Activated CD4-positive, alpha-beta T cell treated with anti-CD3 and anti-CD28 coated beads, Interleukin-2, amount 10 ng/mL, durations not matched to agents 24 days and 14 days (primary cell): ENCODE measurements at regions of chrX and their contacts with region 1.

Region 1: DNA sequence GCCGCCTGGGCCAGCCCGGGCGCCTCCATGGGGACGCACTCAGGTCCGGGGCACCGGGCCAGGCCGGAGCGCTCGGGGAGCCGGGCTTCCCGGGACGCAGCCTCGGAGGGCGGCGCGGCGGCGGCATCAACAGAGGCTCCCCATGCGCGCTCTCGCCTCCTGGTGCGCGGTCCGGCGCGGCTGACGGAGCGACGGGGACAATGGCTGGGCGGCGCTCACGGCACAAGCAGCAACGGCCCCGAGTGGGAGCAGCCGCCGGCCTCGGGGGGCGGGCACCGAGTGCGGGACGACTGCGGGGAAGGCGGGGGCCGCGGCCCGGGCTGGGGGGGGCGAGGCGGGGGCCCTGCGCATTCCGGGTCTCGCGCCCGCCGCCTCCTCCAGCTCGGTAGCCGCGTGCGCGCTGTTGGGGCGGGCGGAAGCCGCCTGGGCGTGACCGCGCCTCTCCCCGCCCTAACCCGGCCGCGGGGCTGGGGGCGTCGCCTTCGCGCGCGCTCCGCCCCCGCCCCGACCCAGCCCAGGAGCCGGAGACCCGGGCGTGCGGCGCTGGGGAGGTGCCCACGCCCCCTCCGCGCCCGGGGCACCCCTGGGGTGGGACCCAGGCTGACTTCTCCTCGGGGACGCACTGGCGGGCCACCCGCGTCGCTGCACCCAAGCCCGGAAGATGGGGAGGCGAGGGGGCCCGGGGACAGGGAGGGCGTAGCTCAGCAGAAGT is at the start of gene PRKX:
- DNase-seq: peak; percentile 93
- H3K4me3 Mint-ChIP-seq: peak within 1 kb of the TSS; percentile 97
- H3K27ac Mint-ChIP-seq: peak within 1 kb of the TSS; percentile 94
- H3K4me1 Mint-ChIP-seq: peaks cover 8% of the 10 kb centered on the region
- H3K27me3 Mint-ChIP-seq: no peaks in the 10 kb centered on the region
- total RNA-seq, gene PRKX: 61.3 and 62.3 TPM in 2 replicates

Region 2: DNA sequence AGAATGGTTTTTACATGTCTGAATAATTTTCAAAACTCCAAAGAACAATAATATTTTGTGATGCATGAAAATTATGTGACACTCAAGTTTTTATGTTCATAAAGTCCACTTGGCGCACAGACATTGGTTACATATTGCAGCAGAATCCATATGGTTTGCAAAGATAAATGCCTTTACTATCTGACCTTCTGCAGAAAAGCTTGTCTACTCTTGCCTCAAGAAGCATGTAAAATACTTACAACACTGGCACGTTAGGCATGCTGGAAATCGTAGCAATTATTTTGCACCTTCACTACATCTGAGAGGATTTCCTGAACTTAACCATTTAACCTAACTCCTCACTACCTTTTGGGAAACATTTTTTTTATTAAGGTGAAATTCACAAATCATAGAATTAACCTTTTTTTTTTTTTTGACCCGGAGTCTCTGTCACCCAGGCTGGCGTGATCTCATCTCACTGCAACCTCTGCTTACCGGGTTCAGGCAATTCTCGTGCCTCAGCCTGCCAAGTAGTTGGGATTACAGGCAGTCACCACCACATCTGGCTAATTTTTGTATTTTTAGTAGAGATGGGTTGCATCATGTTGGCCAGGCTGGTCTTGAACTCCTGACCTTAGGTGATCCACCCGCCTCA is 965.1 kb before region 1 on chrX:
- intact Hi-C with region 1: no loop called
- DNase-seq: no peak
- H3K4me3 Mint-ChIP-seq: no peak overlapping the region
- H3K27ac Mint-ChIP-seq: no peak overlapping the region
- H3K4me1 Mint-ChIP-seq: peaks cover 2% of the 10 kb centered on the region
- H3K27me3 Mint-ChIP-seq: peaks cover 4% of the 10 kb centered on the region

Region 3: GRCh38 chrX:3651276-3651675 is 62.1 kb before region 1 on chrX:
- intact Hi-C with region 1: loop called (anchors 5 kb)
- DNase-seq: peak; percentile 55
- H3K4me3 Mint-ChIP-seq: no peak overlapping the region
- H3K27ac Mint-ChIP-seq: no peak overlapping the region
- H3K4me1 Mint-ChIP-seq: peaks cover 9% of the 10 kb centered on the region
- H3K27me3 Mint-ChIP-seq: no peaks in the 10 kb centered on the region